ENCODE measurements at regions of chr17 and their contacts with region 1.

Region 1: DNA sequence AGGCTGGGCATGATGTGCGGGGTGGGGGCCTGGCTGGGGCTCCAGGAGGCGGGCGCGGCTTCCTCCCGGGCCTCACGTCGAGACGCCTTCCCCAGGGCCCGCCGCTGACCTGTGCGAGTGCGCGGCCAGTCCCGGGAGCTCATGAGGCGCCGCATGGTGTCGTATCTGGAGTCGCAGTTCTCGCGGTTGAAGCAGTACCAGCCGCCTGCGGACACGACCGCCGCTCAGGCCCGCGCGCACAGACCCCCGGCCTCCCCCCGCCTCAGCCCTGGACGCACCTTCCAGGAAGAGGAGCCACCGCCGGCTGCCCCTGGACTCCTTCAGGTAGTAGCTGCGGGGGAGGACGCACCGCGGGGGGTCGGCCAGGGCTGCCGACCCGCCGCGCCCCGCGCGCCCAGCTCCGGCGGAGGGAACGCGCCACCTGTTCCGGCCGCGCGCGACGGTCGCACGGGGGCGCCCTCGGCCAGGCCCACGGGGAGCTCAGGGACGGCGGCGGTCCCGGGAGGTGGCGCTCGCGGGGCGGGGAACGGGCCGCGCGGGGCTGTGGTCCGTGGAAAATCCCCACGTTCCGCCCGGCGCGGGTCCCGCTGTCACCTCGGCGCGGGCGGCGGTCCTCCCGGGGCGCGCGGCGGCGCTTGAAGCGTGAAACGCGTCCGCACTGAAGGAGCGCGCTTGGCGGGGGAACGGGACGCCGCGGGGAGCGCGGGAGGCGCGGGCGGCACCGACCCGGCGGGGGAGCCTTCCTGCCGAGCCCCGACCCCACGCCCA is 1.4 kb downstream of the NOTUM start:
- DNase-seq: peak; percentile 74
- H3K4me3 ChIP-seq: peak overlapping the region; percentile 48
- H3K27ac ChIP-seq: no peak overlapping the region
- H3K4me1 ChIP-seq: peaks cover 8% of the 10 kb centered on the region
- H3K27me3 ChIP-seq: peaks cover 52% of the 10 kb centered on the region
- CTCF ChIP-seq: peak; percentile 54

Region 2: GRCh38 chr17:82020891-82021727 is 61.6 kb after region 1 on chr17:
- intact Hi-C with region 1: loop called (anchors 1 kb)
- DNase-seq: peak; percentile 78
- H3K4me3 ChIP-seq: peak overlapping the region; percentile 77
- H3K27ac ChIP-seq: peak overlapping the region; percentile 54
- H3K4me1 ChIP-seq: peaks cover 17% of the 10 kb centered on the region
- H3K27me3 ChIP-seq: no peaks in the 10 kb centered on the region
- CTCF ChIP-seq: peak; percentile 70

Region 3: GRCh38 chr17:82154881-82155331 is 195.4 kb after region 1 on chr17:
- intact Hi-C with region 1: loop called (anchors 5 kb)
- DNase-seq: no peak
- H3K4me3 ChIP-seq: no peak overlapping the region
- H3K27ac ChIP-seq: no peak overlapping the region
- H3K4me1 ChIP-seq: no peaks in the 10 kb centered on the region
- H3K27me3 ChIP-seq: no peaks in the 10 kb centered on the region
- CTCF ChIP-seq: no peak

Region 4: DNA sequence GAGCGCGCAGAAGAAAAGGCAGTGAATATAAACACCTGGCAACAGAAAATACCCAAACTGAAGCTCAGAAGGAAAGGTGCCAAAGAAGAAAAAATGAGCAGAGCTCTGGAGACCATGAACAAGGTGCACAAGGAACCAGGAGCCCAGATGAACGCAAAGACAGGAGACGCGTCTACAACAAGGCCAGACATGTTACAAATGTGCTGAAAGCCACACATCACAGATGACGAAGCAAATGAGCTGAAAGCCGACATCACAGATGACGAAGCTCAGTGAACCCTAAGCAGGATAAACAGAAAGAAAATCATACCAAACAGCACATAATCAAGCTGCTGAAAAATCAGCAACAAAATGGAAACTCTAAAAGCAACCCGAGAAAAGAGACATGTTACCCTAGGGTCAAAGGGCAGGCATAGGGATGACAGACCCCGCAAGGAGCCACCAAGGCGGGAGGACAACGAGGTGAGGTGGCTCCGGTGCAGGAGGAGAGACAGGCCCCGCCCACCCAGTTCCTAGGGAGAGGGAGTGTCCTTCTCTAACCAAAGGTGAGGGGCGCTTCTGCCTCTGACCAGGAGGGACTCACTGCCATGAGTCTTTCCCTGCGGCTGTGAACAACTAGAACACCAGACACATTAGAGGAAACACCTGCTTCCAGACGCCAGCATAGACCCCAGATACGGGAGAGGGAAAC is 213.9 kb after region 1 on chr17:
- intact Hi-C with region 1: no loop called
- DNase-seq: no peak
- H3K4me3 ChIP-seq: no peak overlapping the region
- H3K27ac ChIP-seq: no peak overlapping the region
- H3K4me1 ChIP-seq: no peaks in the 10 kb centered on the region
- H3K27me3 ChIP-seq: no peaks in the 10 kb centered on the region
- CTCF ChIP-seq: no peak

Measured in colonic mucosa (tissue), 4 donors.